MCF 10A (cell line): ENCODE measurements at regions of chr15 and their contacts with region 1.

Region 1: DNA sequence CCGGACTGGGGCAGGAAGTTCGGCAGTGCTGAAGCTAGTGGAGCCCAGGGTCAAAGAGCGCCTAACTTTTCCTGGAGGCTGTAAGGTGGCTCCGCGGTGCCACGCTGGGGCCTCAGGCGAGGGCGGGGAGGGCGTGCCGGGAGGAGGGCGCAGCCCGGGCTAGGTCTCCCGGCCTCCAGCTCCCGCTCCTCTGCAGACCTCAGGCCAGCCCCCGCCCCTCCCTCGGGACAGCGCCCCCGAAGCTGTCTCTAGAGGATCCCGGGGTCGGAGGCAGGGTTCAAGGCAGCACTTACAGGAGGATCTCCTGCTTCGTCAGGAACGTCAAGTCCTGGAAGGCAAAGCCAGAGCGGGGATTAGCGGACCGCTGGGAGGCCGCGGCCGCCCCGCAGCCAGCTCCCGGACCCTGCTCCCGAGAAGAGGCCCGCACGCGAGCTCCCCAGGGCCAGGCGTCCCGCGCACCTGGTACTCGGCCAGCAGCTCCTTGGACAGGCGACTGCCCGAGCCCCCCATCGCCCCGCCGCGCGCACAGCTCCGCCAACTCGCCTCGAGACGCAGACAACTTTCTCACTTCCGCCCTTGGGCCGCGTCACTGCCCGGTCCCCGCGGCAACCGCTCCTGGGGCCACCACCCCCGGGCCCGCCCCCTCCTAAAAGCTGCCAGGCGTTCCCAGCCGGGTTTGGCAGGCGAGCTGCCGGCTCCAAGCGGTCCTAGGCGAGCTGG is at the start of gene CIB1:
- DNase-seq: peak; percentile 97
- H3K4me3 Mint-ChIP-seq: peak within 1 kb of the TSS; percentile 85
- H3K27ac Mint-ChIP-seq: peak within 1 kb of the TSS; percentile 12
- H3K4me1 Mint-ChIP-seq: peaks cover 19% of the 10 kb centered on the region
- H3K27me3 Mint-ChIP-seq: no peaks in the 10 kb centered on the region
- CTCF ChIP-seq: no peak
- total RNA-seq, gene CIB1: 45.6 and 50.5 TPM in 2 replicates

Region 2: GRCh38 chr15:89893696-89894455 is 339.7 kb before region 1 on chr15 and contains the start of gene AP3S2:
- CTCF ChIA-PET with region 1: interaction called, 3 read pairs
- POLR2A ChIA-PET with region 1: interaction called, 17 read pairs
- intact Hi-C with region 1: loop called (anchors 5 kb)
- DNase-seq: peak; percentile 94
- H3K4me3 Mint-ChIP-seq: peak within 1 kb of the TSS; percentile 98
- H3K27ac Mint-ChIP-seq: peak within 1 kb of the TSS; percentile 97
- H3K4me1 Mint-ChIP-seq: no peaks in the 10 kb centered on the region
- H3K27me3 Mint-ChIP-seq: no peaks in the 10 kb centered on the region
- CTCF ChIP-seq: no peak
- total RNA-seq, gene AP3S2: 38.4 and 39.5 TPM in 2 replicates

Region 3: DNA sequence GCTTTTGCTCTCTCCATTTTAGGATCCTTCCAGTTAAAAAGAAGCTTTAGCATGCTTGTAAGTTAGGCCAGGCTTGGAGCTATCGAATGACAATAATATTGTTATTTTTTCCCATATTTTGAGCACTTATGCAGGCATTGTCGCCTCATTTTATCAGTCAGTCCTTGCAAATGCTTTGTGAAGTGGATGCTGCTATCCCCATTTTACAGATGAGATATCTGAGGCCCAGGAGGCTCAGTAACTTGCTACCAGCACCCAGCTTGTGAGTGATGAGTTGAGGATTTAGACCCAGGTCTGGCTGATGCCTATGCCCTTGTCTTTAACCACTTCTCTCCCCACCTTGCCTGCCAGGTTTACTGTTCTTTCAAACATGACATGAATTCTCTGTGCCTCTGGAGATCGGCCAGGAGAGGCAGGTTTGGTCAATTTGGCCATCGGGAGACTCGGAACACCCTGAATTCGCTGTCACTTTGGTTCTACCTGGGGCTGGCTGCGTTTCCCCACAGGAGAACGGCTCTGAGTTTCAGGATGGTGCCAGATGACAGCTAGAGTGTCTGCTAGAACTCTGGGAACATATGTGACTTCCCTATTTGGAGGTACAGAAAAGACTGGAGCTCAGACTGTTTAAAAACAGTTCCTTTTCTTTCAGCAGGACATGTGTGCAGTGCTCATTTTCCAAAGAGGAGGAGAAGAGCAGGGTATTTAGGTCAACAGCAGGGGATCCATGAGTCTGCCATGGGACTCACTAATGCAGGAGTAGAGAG is 257.9 kb before region 1 on chr15:
- CTCF ChIA-PET with region 1: no interaction called
- POLR2A ChIA-PET with region 1: no interaction called
- intact Hi-C with region 1: no loop called
- DNase-seq: no peak
- H3K4me3 Mint-ChIP-seq: no peak overlapping the region
- H3K27ac Mint-ChIP-seq: no peak overlapping the region
- H3K4me1 Mint-ChIP-seq: no peaks in the 10 kb centered on the region
- H3K27me3 Mint-ChIP-seq: no peaks in the 10 kb centered on the region
- CTCF ChIP-seq: no peak

Region 4: GRCh38 chr15:90151989-90152645 is 81.4 kb before region 1 on chr15:
- CTCF ChIA-PET with region 1: interaction called, 11 read pairs
- POLR2A ChIA-PET with region 1: interaction called, 4 read pairs
- intact Hi-C with region 1: no loop called
- DNase-seq: no peak
- H3K4me3 Mint-ChIP-seq: no peak overlapping the region
- H3K27ac Mint-ChIP-seq: no peak overlapping the region
- H3K4me1 Mint-ChIP-seq: peaks cover 8% of the 10 kb centered on the region
- H3K27me3 Mint-ChIP-seq: no peaks in the 10 kb centered on the region
- CTCF ChIP-seq: no peak

Region 5: DNA sequence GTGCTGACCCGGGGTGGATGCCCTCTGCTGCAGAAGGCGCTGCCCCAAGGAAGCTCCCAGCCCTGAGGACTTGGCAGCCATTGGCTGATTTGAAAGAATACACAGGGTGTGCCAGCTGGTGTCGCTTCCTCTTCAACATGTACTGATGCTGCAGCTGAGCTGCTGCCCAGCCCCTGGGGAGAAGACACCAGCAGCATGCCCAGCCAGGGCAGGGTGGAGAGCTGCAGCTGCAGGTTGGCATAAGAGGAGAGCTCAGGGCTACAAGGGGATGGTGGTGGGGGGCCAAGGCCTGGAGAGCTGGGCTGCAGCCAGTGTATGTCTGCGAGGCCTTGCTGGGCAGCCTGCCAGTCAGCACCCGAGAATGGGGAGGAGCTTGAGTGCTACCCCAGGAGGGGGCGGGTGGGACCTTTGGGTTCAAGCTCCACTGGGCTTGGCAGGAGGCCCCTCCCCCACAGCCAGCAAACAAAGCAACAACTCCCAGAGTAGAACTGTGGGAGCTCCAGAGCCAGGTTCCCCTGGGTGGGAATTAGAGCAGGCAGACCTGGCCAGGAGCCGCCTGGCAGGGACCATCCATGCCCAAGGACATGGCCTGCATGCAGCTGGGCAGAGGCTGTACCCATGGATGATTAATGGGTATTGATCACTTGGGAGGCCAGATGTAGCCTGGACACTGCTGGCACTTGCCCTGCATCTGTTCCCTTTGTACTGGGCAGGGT is 41.6 kb before region 1 on chr15:
- CTCF ChIA-PET with region 1: interaction called, 6 read pairs
- POLR2A ChIA-PET with region 1: interaction called, 44 read pairs
- intact Hi-C with region 1: no loop called
- DNase-seq: peak; percentile 92
- H3K4me3 Mint-ChIP-seq: peak overlapping the region; percentile 58
- H3K27ac Mint-ChIP-seq: peak overlapping the region; percentile 88
- H3K4me1 Mint-ChIP-seq: peaks cover 31% of the 10 kb centered on the region
- H3K27me3 Mint-ChIP-seq: no peaks in the 10 kb centered on the region
- CTCF ChIP-seq: no peak

Region 6: DNA sequence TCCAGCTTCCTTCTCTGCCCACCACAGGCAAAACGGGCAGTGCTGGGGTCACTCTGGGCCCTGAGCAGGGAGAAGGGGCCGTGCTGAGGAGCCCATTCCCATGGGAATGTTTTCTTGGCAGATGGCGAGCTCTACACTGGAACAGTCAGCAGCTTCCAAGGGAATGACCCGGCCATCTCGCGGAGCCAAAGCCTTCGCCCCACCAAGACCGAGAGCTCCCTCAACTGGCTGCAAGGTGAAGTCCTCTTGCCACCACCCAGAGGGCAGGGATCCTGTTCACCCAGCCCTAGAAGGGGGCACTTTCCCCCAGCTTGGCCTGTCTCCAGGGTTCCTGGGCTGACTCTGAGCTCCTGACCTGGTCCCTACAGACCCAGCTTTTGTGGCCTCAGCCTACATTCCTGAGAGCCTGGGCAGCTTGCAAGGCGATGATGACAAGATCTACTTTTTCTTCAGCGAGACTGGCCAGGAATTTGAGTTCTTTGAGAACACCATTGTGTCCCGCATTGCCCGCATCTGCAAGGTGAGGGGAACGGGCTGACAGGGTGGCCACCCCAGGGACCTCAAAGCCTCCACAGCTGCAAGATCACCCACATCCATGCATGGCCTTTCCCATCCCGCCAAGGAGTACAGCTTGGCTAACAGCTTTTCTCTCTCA is 12.2 kb before region 1 on chr15:
- CTCF ChIA-PET with region 1: interaction called, 48 read pairs
- POLR2A ChIA-PET with region 1: interaction called, 6 read pairs
- intact Hi-C with region 1: no loop called
- DNase-seq: peak; percentile 75
- H3K4me3 Mint-ChIP-seq: no peak overlapping the region
- H3K27ac Mint-ChIP-seq: no peak overlapping the region
- H3K4me1 Mint-ChIP-seq: no peaks in the 10 kb centered on the region
- H3K27me3 Mint-ChIP-seq: no peaks in the 10 kb centered on the region
- CTCF ChIP-seq: peak; percentile 90

Region 7: DNA sequence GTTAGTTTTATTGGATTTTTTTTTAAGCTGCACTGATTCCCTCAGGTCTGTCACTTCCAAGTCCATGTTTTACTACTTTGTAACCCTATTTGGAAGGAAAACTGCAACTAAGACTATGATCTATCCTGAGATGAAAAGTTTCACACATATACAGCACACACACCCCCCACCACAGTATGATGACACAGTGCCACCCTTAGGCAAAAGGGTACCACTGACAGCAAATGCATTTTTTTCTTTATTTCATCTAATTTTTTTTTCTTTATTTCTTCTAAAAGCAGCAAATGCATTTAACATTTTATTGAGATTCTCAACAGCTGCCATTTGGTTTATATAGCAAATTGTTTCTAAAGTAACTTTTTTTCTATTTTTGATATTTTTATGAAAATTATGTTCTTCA is 53.1 kb after region 1 on chr15:
- CTCF ChIA-PET with region 1: interaction called, 3 read pairs
- POLR2A ChIA-PET with region 1: no interaction called
- intact Hi-C with region 1: loop called (anchors 1 kb)
- DNase-seq: peak; percentile 65
- H3K4me3 Mint-ChIP-seq: no peak overlapping the region
- H3K27ac Mint-ChIP-seq: no peak overlapping the region
- H3K4me1 Mint-ChIP-seq: no peaks in the 10 kb centered on the region
- H3K27me3 Mint-ChIP-seq: no peaks in the 10 kb centered on the region
- CTCF ChIP-seq: peak; percentile 20